AG04450 (cell line): ENCODE measurements at regions of chr5 and their contacts with region 1.

Region 1: GRCh38 chr5:66821688-66822429 is 225.7 kb downstream of the MAST4 start:
- DNase-seq: no peak
- H3K4me3 ChIP-seq: no peak overlapping the region
- H3K27ac ChIP-seq: no peak overlapping the region
- H3K27me3 ChIP-seq: peaks cover 7% of the 10 kb centered on the region
- CTCF ChIP-seq: no peak

Region 2: GRCh38 chr5:66807743-66808142 is 14.1 kb before region 1 on chr5:
- CTCF ChIA-PET with region 1: interaction called, 58 read pairs
- POLR2A ChIA-PET with region 1: no interaction called
- DNase-seq: peak; percentile 16
- H3K4me3 ChIP-seq: no peak overlapping the region
- H3K27ac ChIP-seq: no peak overlapping the region
- H3K27me3 ChIP-seq: peaks cover 12% of the 10 kb centered on the region
- CTCF ChIP-seq: peak; percentile 62